Naive thymus-derived CD8-positive, alpha-beta T cell (primary cell): ENCODE measurements at regions of chr6 and their contacts with region 1.

Region 1: DNA sequence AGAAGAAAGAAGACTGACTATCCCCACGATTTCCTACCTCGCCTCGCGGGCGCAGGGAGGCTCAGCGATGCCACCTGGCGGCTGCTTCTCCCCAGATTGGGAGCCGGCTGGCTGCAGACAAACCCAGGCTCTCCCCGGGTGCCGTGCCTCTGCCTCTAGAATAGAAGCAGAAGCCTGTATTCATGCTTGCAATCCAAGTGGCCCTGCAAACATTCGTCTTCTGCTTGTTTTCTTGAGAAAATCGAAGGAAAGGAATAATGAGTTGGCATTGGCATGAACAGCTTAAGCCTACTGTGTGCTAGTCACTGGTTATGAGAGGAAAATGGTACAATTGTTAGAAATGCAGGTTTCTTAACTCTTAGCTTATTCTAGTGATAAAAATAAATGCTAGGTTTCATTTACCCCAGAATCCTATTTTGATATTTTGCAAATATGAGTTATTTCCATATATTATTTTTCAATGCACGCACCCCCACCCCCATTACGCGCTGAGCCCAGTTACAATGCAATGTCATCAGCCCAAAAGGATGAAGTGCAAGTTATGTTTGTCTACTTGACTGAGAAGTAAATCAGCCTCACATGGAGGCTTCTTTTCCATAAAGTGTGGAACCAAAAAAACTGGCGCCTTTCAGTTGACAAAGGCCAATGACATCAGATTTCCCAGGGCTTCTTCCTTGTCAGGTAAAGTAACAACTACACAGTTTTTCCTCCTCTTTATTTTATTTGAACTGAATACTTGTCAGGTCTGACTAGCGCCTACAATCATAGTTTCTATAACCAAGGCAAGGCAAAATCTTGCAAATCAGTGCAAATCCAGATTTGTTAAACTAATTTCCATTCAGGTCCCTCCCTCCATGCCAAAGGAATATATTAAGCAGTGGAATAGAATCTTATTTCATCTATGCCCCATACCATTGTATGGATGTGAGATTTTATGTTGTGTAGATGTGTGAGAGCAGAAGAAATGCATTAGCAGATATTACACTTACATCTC is 3.9 kb upstream of the SOX4 start:
- DNase-seq: peak; percentile 59 to 86 (median 72)
- ATAC-seq: peak; percentile 44 to 46
- H3K4me3 Mint-ChIP-seq: peak overlapping the region; percentile 89 to 98 (median 95)
- H3K27ac Mint-ChIP-seq: peak overlapping the region in 4 of 10 donors; percentile 20 to 76 (median 61)
- H3K4me1 Mint-ChIP-seq: peaks cover 10 to 17% (median 14%) of the 10 kb centered on the region in 4 donors
- H3K27me3 Mint-ChIP-seq: peaks cover 4 to 18% (median 9%) of the 10 kb centered on the region in 5 donors

Region 2: GRCh38 chr6:20564269-20564668 is 1025.4 kb before region 1 on chr6:
- POLR2A ChIA-PET with region 1: interaction called, 13 read pairs
- DNase-seq: peak in 3 of 10 donors; percentile 36 to 51 (median 41)
- ATAC-seq: no peak
- H3K4me3 Mint-ChIP-seq: no peak overlapping the region
- H3K27ac Mint-ChIP-seq: no peak overlapping the region
- H3K4me1 Mint-ChIP-seq: peaks cover 3 to 18% (median 8%) of the 10 kb centered on the region in 4 donors
- H3K27me3 Mint-ChIP-seq: no peaks in the 10 kb centered on the region

Region 3: GRCh38 chr6:21554286-21554685 is 35.4 kb before region 1 on chr6:
- POLR2A ChIA-PET with region 1: no interaction called
- DNase-seq: no peak
- ATAC-seq: no peak
- H3K4me3 Mint-ChIP-seq: no peak overlapping the region
- H3K27ac Mint-ChIP-seq: peak overlapping the region in 1 of 10 donors; percentile 26
- H3K4me1 Mint-ChIP-seq: no peaks in the 10 kb centered on the region
- H3K27me3 Mint-ChIP-seq: peaks cover 0 to 7% (median 3%) of the 10 kb centered on the region in 5 donors